Aorta (tissue), 5 donors: ENCODE measurements at regions of chr9 and their contacts with region 1.

Region 1: GRCh38 chr9:21317956-21318923 is 13.1 kb upstream of the IFNA5 start:
- DNase-seq: peak in 1 of 2 donors; percentile 41
- ATAC-seq: peak; percentile 72
- H3K4me3 ChIP-seq: no peak overlapping the region
- H3K27ac ChIP-seq: no peak overlapping the region
- H3K4me1 ChIP-seq: no peaks in the 10 kb centered on the region
- H3K27me3 ChIP-seq: no peaks in the 10 kb centered on the region

Region 2: GRCh38 chr9:20683351-20684034 is 634.7 kb before region 1 on chr9:
- intact Hi-C with region 1: no loop called
- DNase-seq: peak; percentile 68 to 79
- ATAC-seq: peak; percentile 61
- H3K4me3 ChIP-seq: peak overlapping the region; percentile 59 to 74
- H3K27ac ChIP-seq: peak overlapping the region; percentile 20 to 44
- H3K4me1 ChIP-seq: peaks cover 0 to 3% of the 10 kb centered on the region in 2 donors
- H3K27me3 ChIP-seq: no peaks in the 10 kb centered on the region

Region 3: DNA sequence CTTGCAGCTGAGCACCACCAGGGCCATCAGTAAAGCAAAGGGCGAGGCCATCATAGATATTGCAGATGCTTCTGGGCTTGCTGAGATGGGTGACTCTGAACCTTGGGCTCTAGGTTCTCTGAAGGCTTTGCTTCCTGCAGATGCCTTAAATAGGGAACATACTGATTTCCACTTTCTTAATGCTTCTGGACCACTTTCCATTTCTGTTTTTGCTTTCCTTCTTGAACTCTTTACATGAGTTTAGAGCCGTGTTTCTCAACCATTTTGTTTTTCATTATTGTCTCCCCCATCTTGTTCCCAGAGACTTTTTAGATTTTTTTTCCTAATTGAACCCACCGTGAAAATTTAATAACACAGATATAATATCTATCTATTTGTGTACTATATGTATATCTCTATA is 49.7 kb after region 1 on chr9 and contains the start of gene IFNA13:
- intact Hi-C with region 1: no loop called
- DNase-seq: no peak
- ATAC-seq: no peak
- H3K4me3 ChIP-seq: no peak within 1 kb of the TSS
- H3K27ac ChIP-seq: no peak within 1 kb of the TSS
- H3K4me1 ChIP-seq: no peaks in the 10 kb centered on the region
- H3K27me3 ChIP-seq: peaks cover 0 to 1% of the 10 kb centered on the region in 2 donors
- total RNA-seq, gene IFNA13: not detected

Region 4: DNA sequence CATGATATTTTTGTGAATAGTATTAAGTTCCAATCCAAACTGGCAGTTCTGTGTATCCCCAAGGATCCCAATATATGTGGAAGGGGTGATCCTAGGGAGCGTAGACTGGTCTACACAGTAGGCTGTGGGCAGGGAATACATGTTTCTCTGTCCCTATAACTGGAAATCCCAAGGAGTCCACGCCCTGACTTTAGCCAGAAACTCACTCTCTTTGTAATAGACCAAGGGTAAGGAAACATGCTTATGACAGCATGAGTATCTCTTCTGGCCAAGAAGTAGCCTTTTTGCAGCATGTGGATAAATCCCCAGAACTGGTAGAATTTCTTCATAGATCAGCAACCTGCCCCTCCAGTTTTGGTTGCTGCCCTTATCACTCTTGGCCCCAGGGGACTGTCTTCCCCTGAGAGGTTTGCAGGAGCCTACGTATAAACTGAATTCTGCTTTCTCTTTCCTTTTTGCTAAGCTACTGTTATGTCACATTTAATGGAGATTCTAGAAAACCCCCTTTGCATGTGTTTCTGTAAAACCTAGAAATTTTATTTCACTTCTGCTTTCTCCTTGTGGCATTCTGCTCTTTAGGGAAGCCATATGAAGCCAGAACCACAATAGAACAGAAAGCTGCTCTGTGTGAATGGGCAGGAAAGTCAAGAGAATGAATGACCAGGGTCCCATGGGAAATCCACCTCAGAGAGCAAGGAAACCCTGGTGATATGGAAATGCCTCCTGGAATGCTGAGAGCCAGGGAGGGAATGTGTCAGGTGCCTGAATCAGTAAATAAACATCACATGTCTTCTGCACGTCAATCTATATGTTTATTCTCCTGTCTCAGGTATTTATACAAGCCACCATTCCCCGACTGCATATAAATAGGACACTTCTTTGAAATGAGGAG is 63.5 kb after region 1 on chr9:
- intact Hi-C with region 1: no loop called
- DNase-seq: no peak
- ATAC-seq: no peak
- H3K4me3 ChIP-seq: no peak overlapping the region
- H3K27ac ChIP-seq: no peak overlapping the region
- H3K4me1 ChIP-seq: no peaks in the 10 kb centered on the region
- H3K27me3 ChIP-seq: peaks cover 0 to 1% of the 10 kb centered on the region in 2 donors

Region 5: GRCh38 chr9:21395778-21396717 is 77.8 kb after region 1 on chr9:
- intact Hi-C with region 1: loop called in 1 of 2 experiments (anchors 2 kb)
- DNase-seq: peak; percentile 52 to 81
- ATAC-seq: peak; percentile 82
- H3K4me3 ChIP-seq: peak overlapping the region in 1 of 2 donors; percentile 37
- H3K27ac ChIP-seq: no peak overlapping the region
- H3K4me1 ChIP-seq: no peaks in the 10 kb centered on the region
- H3K27me3 ChIP-seq: peaks cover 0 to 6% of the 10 kb centered on the region in 2 donors

Region 6: DNA sequence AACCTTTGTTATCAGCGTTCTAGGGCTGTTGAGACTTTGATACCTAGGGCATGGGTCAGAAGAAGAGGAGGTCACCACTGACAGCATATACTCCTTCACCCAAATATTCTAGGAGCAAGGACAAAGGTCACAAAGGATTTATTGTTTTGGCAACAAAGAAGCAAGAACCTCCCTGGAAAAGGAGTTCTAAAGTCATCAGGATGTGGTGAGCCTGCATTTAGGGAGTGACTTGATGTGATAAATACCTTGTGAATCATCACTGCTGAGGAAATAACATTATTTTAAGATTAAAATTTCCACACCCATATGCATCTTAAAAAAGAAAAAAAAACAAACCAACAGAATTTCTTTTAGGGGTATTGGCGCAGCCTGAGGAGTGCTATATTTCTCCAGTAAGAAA is 135.9 kb after region 1 on chr9:
- intact Hi-C with region 1: loop called in 1 of 2 experiments (anchors 5 kb)
- DNase-seq: no peak
- ATAC-seq: no peak
- H3K4me3 ChIP-seq: no peak overlapping the region
- H3K27ac ChIP-seq: no peak overlapping the region
- H3K4me1 ChIP-seq: no peaks in the 10 kb centered on the region
- H3K27me3 ChIP-seq: no peaks in the 10 kb centered on the region

Region 7: GRCh38 chr9:21796768-21797167 is 478.5 kb after region 1 on chr9:
- intact Hi-C with region 1: loop called (anchors 5 kb)
- DNase-seq: no peak
- ATAC-seq: no peak
- H3K4me3 ChIP-seq: no peak overlapping the region
- H3K27ac ChIP-seq: no peak overlapping the region
- H3K4me1 ChIP-seq: no peaks in the 10 kb centered on the region
- H3K27me3 ChIP-seq: no peaks in the 10 kb centered on the region